ENCODE measurements at regions of chr3 and their contacts with region 1.

Region 1: GRCh38 chr3:47250309-47251060 is 32.1 kb downstream of the KIF9 start:
- DNase-seq: peak; percentile 44
- ATAC-seq: peak; percentile 83

Region 2: DNA sequence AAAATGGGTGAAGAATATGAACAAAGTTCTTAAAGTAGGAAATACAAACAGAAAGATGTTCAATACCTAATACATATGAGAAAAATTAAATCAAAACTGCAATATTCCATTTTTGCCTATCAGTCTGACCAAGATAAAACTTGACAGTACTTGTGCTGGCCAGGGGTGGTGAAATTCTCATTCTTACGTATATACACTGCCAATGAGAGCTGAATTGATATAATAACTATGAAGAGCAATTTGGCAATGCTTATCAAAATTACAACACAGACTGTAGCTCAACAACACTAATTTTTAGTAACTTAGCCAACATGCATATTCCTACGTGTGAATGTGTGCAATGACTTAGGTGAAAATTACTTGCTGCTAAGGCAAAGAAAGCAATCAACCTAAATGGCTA is 176.8 kb before region 1 on chr3:
- intact Hi-C with region 1: no loop called
- DNase-seq: no peak
- ATAC-seq: no peak

Region 3: GRCh38 chr3:47324278-47324865 is 73.9 kb after region 1 on chr3:
- intact Hi-C with region 1: loop called (anchors 5 kb)
- DNase-seq: no peak
- ATAC-seq: peak; percentile 92

Region 4: DNA sequence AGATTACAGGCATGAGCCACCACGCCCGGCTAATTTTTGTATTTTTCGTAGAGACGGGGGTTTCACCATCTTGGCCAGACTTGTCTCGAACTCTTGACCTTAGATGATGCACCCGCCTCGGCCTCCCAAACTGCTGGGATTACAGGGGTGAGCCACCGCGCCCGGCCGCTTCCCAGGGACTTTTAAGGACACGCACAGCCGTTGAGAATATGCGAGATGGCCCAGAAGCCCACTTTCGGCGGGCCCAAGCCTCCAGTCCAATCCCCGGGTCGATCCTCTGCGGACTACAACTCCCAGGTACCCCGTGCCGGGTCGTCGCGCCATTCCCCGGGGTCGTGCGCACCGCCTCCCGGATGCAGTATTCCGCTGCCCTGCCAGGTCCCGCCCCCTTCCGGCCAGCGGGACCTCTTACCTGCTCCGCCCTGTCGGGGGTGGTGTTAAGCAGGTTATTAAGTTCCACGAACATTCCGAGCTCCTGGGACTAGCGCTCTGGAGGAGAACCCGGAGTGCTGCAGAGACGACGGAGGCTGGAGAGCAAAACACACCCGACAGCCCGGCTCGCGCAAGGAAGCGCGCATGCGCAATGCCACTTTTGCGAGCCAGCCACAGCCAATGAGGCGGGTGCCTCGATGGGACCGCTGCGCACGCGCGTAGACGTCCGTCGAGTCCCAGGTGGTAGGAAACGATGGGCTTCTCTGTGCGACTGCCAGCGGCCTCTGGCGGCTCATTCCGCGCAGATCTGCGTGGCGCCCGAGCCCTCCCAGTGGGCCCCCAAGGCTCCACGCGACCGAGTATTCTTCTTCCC is 262.8 kb after region 1 on chr3 and contains the start of gene ELP6:
- intact Hi-C with region 1: no loop called
- DNase-seq: peak; percentile 98
- ATAC-seq: peak; percentile 99
- total RNA-seq, gene ELP6: 18.5 TPM